GM23248 (cell line): ENCODE measurements at regions of chrX and their contacts with region 1.

Region 1: GRCh38 chrX:107025545-107025944 is 25.5 kb upstream of the MORC4 start:
- DNase-seq: peak; percentile 48
- H3K4me3 ChIP-seq: no peak overlapping the region
- H3K27ac ChIP-seq: no peak overlapping the region
- H3K4me1 ChIP-seq: no peaks in the 10 kb centered on the region
- H3K27me3 ChIP-seq: no peaks in the 10 kb centered on the region

Region 2: DNA sequence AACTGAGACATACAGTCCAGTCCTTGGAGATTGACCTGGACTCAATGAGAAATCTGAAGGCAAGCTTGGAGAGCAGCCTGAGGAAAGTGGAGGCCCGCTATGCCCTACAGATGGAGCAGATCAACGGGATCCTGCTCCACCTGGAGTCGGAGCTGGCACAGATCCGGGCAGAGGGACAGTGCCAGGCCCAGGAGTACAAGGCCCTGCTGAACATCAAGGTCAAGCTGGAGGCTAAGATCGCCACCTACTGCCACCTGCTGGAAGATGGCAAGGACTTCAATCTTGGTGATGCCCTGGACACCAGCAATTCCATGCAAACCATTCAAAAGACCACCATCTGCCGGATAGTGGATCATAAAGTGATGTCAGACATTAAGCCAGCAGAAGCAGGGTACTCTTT is 403.5 kb after region 1 on chrX:
- in situ Hi-C with region 1: loop called (anchors 25 kb)
- DNase-seq: peak; percentile 16
- H3K4me3 ChIP-seq: no peak overlapping the region
- H3K27ac ChIP-seq: no peak overlapping the region
- H3K4me1 ChIP-seq: no peaks in the 10 kb centered on the region
- H3K27me3 ChIP-seq: no peaks in the 10 kb centered on the region

Region 3: DNA sequence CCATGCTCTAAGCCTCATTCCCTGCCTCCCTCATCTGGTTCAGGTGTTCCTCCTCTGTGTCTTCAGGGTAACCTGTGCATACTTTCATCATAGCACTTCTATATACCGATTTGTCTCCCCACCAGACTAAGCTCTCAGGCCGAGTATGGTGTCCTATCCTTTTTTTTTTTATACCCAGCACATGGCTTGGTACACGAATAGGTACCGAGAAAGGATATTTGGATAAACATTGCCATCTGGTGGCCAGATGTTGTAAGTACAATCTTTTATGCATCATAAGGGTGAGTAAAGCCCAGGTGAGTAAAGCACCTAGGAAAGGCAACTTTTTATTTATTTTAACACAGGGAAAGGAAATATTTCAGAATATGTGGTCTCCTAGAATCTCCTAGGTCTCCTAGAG is 868.5 kb after region 1 on chrX:
- in situ Hi-C with region 1: no loop called
- DNase-seq: peak; percentile 37
- H3K4me3 ChIP-seq: no peak overlapping the region
- H3K27ac ChIP-seq: no peak overlapping the region
- H3K4me1 ChIP-seq: no peaks in the 10 kb centered on the region
- H3K27me3 ChIP-seq: no peaks in the 10 kb centered on the region